Activated CD8-positive, alpha-beta memory T cell treated with anti-CD3 and anti-CD28 coated beads, Interleukin-2, amount 10 ng/mL, durations not matched to agents 7 days and 5 days (primary cell): ENCODE measurements at regions of chr6 and their contacts with region 1.

Region 1: DNA sequence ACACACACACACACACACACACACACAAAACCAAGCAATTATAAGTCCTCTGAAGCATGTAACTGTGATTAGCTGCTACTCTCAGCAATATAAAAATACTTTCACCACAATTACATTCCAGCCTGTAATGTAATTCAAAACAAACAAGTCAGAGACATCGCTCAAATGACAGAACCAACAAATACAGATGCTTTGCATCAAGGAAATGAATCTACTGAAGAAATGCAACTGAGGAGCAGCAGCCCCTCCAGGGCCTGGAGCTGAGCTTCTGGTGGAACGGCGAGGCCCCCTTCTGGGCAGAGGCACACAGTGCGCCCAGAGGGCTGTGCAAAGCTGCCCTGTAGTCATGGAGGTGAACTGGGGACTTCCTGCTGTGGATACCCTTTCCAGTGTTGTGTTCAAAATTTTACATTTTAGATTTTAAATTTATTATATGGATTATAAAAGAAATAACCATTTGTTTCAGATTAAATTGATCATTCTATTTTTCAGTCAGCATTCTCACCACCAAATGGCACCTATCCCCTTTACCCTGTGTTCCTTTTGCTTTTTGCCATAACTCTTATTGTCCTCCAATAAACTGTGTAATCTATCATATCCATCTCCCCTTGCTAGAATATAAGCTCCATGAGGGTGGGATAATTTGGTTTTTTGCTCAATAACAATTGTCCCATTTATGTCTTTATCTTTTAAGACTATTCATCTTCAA is 23.2 kb downstream of the ADAT2 start:
- DNase-seq: peak; percentile 80
- ATAC-seq: peak; percentile 98
- H3K4me3 Mint-ChIP-seq: no peak overlapping the region
- H3K27ac Mint-ChIP-seq: no peak overlapping the region
- H3K4me1 Mint-ChIP-seq: no peaks in the 10 kb centered on the region
- H3K27me3 Mint-ChIP-seq: no peaks in the 10 kb centered on the region

Region 2: GRCh38 chr6:142474531-142475289 is 952.6 kb before region 1 on chr6:
- CTCF ChIA-PET with region 1: interaction called, 10 read pairs
- DNase-seq: no peak
- ATAC-seq: no peak
- H3K4me3 Mint-ChIP-seq: no peak overlapping the region
- H3K27ac Mint-ChIP-seq: no peak overlapping the region
- H3K4me1 Mint-ChIP-seq: peaks cover 4% of the 10 kb centered on the region
- H3K27me3 Mint-ChIP-seq: peaks cover 12% of the 10 kb centered on the region

Region 3: DNA sequence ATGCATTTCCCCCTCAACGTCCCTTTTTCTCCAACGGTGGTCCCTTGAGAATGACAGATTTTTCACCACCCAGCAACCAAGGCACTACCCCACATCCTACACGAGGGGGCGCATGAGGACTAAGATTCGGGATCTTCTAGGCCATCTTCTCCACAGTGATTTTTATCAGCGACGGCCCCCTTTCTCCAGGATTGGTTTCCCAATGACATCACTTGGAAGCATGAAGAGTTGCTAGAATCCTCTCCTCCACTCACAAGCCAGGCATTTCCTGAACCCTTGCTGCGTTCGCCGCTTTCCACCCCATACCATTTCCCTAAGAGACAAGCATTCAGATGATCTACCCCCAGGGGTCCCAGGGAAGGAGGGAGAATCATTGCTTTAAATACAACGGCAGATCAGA is 734.3 kb before region 1 on chr6:
- CTCF ChIA-PET with region 1: interaction called, 18 read pairs
- DNase-seq: peak; percentile 68
- ATAC-seq: peak; percentile 81
- H3K4me3 Mint-ChIP-seq: no peak overlapping the region
- H3K27ac Mint-ChIP-seq: no peak overlapping the region
- H3K4me1 Mint-ChIP-seq: peaks cover 11% of the 10 kb centered on the region
- H3K27me3 Mint-ChIP-seq: peaks cover 3% of the 10 kb centered on the region

Region 4: DNA sequence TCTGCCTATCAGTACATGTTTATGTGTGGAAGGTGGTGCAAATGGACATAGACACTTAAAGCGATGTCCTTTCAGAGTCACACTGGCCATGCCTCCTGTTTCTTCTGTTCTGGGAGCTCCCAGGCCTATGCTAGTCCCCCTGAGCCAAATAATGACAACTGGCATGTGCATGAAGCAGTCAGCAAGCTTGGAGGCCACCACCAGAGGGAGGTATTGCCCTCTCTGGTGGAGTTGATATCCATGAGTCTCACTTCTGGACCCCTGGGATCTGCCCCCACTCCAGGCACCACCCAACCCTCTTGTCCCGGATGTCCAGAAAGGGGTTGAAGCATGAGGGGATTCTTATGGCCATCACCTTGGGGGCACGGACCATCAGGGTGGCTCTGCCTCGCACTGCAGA is 194.4 kb before region 1 on chr6:
- CTCF ChIA-PET with region 1: interaction called, 21 read pairs
- DNase-seq: peak; percentile 57
- ATAC-seq: no peak
- H3K4me3 Mint-ChIP-seq: no peak overlapping the region
- H3K27ac Mint-ChIP-seq: no peak overlapping the region
- H3K4me1 Mint-ChIP-seq: no peaks in the 10 kb centered on the region
- H3K27me3 Mint-ChIP-seq: no peaks in the 10 kb centered on the region

Region 5: GRCh38 chr6:143357561-143358255 is 69.6 kb before region 1 on chr6:
- CTCF ChIA-PET with region 1: no interaction called
- DNase-seq: no peak
- ATAC-seq: no peak
- H3K4me3 Mint-ChIP-seq: no peak overlapping the region
- H3K27ac Mint-ChIP-seq: no peak overlapping the region
- H3K4me1 Mint-ChIP-seq: no peaks in the 10 kb centered on the region
- H3K27me3 Mint-ChIP-seq: peaks cover 12% of the 10 kb centered on the region

Region 6: DNA sequence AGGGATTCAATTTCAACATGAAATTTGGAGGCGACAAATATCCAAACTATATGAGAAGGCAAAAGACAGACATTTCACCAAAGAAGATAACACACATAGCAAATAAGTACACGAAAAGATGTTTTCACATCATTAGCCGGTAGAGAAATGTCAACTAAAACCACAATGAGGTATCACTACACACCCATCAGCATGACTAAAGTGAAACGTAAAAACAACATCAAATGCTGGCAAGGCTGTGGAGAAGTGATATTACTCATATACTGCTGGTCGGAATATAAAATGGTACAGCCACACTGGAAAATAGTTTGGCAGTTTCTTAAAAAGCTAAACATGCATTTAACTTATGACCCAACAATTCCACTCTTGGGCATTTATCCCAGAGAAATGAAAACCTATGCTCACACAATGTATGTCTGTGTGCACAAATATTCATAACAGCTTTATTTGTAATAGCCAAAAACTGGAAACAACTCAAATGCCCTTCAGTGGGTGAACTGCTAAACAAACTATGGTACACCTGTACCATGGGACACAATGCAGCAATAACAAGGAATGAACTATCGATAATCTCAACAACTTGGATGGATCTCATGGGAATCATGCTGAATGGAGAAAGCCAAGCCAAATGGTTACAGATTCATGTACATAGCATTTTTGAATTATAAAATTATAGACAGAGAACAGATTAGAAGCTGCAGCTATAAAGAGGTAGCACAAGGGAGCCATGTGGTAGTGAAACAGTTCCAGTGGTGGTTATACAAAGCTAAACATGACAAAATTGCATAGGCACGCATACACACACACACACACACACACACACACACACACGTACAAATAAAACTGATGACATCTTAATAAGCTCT is 14.7 kb after region 1 on chr6:
- CTCF ChIA-PET with region 1: interaction called, 13 read pairs
- DNase-seq: no peak
- ATAC-seq: peak; percentile 94
- H3K4me3 Mint-ChIP-seq: no peak overlapping the region
- H3K27ac Mint-ChIP-seq: peak overlapping the region; percentile 84
- H3K4me1 Mint-ChIP-seq: peaks cover 34% of the 10 kb centered on the region
- H3K27me3 Mint-ChIP-seq: no peaks in the 10 kb centered on the region